Left lung (tissue), 14 donors: ENCODE measurements at regions of chr22 and their contacts with region 1.

Region 1: DNA sequence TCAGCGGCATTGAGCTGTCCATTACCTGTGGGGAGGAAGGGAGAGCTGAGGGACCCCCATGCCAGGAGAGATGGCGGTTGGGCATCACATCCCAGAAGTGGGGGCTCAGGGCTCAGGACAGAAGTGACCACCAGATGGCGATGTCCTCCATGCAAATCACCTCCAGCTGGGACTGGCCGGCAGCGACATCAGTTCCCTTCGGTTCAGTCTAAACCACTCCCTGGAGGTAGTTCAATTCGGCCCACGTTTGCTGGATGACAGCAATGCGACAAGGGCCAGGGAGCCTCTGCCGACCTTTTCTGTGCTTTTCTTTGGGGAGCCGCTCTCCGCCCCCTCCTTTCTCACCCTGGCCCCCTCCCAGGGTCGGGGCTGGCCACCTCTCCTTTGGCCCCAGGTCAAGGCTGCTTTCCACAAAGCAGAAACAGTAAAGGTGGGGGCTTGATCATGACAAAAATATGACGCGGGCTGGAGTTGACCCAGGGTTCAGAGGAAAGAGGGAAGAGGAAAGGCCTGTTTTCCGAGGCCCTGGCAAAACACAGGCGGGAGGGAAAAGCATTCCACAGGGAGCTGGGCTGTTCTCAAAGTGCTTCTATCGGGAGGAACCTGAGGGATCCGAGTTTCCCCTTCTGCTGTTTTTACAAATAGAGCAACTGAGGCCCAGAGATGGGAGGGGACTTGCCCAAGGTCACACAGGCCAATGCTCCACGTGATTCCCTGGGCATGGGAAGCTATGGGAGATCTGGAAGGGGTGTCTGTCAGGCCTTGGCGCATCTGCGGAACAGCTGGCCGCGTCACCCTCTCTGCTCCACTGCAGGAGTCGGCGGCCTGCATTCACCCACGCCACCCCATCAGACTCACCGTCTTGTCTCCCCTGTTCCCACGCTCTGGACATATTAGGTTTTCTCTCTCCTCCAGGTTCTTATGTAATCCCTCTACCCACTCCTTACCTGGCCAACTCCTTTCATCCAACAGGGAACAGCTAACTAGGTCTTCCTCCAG is 54.7 kb downstream of the FBXO7 start:
- DNase-seq: peak; percentile 80 to 92 (median 84)
- ATAC-seq: peak; percentile 87
- H3K4me3 ChIP-seq: no peak overlapping the region
- H3K27ac ChIP-seq: peak overlapping the region; percentile 17 to 34
- H3K4me1 ChIP-seq: peaks cover 16 to 35% of the 10 kb centered on the region in 2 donors
- H3K27me3 ChIP-seq: no peaks in the 10 kb centered on the region
- CTCF ChIP-seq: peak; percentile 82 to 88

Region 2: GRCh38 chr22:32396746-32397145 is 132.5 kb before region 1 on chr22:
- intact Hi-C with region 1: no loop called
- DNase-seq: peak in 1 of 4 donors; percentile 48
- ATAC-seq: peak; percentile 79
- H3K4me3 ChIP-seq: no peak overlapping the region
- H3K27ac ChIP-seq: no peak overlapping the region
- H3K4me1 ChIP-seq: no peaks in the 10 kb centered on the region
- H3K27me3 ChIP-seq: no peaks in the 10 kb centered on the region
- CTCF ChIP-seq: no peak

Region 3: DNA sequence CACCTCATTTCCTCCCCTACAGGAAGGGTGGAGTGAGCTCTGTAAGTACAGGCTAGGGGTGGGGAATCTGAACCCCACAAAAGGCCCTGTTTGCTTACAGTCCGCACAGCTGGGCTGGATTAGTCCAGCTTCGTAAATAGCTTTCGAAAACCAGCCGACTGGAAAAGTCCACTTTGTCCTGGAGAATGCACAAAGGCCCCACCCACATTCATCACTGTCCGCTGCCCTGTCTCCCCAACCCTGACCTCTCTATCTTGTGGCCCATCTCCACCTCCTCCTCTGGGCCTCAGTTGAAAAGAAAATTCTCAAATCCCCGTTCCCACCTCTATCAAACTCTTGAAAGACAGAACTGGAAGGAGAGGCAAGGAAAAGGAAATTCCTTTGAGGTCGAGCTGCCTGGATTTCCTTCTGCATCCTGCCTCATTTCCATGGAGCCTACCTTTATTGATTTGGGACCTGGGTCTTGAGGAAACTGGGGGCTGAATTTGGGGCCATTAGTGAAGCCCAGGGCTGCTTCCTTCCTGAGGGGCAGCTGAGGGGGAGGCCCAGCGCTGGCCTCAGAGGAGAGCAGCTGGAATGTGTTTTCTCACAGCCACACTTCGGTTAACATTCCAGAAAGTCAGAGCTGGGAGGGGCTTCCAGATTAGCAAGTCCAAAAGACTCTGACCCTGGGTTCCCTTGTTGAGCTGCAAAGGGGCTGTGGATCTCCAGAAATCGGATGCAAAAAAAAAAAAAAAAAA is 92.9 kb after region 1 on chr22:
- intact Hi-C with region 1: loop called in 1 of 2 experiments (anchors 10 kb)
- DNase-seq: peak in 2 of 4 donors; percentile 93 to 96
- ATAC-seq: peak; percentile 63
- H3K4me3 ChIP-seq: no peak overlapping the region
- H3K27ac ChIP-seq: peak overlapping the region; percentile 75 to 80
- H3K4me1 ChIP-seq: peaks cover 22 to 28% of the 10 kb centered on the region in 2 donors
- H3K27me3 ChIP-seq: peaks cover 0 to 5% of the 10 kb centered on the region in 2 donors
- CTCF ChIP-seq: no peak

Region 4: DNA sequence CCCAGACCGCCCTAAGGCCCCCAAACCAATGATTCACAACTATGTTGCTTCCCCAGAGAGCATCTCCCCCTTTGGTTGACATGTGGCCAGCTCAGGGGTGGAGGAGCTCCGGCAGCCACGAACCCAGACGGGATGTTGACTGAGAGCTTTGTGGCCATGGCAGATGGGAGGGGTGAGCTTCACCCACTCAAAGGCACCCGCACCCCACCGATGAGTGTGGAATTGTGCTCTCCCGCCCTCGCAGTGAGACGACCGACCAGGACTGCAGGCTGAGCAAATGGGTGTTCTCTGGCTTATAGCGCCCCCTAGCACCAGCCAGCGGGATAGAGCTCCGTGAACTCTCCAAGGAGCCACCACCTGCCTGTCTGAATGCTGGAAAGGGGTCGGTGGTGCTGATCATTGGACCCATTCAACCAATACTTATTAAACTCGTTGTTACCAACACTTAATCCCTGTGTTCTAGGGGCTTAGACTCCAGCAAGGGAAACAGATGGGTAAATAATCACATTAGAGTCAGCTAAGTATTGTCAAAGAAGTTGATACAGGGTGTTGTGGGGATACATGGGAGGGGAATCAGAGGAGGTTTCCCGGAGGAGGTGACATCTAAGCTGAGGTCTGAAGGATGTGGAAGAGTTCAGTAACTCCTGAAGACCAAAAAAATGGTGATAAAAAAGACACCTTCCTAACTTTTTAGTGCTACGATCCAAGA is 267.7 kb after region 1 on chr22:
- intact Hi-C with region 1: loop called in 1 of 2 experiments (anchors 10 kb)
- DNase-seq: peak; percentile 68 to 80 (median 73)
- ATAC-seq: peak; percentile 83
- H3K4me3 ChIP-seq: no peak overlapping the region
- H3K27ac ChIP-seq: no peak overlapping the region
- H3K4me1 ChIP-seq: peaks cover 0 to 14% of the 10 kb centered on the region in 2 donors
- H3K27me3 ChIP-seq: peaks cover 5 to 30% of the 10 kb centered on the region in 2 donors
- CTCF ChIP-seq: peak; percentile 85 to 91

Region 5: GRCh38 chr22:32820131-32821119 is 291.1 kb after region 1 on chr22:
- intact Hi-C with region 1: no loop called
- DNase-seq: no peak
- ATAC-seq: no peak
- H3K4me3 ChIP-seq: no peak overlapping the region
- H3K27ac ChIP-seq: no peak overlapping the region
- H3K4me1 ChIP-seq: peaks cover 4 to 30% of the 10 kb centered on the region in 2 donors
- H3K27me3 ChIP-seq: no peaks in the 10 kb centered on the region
- CTCF ChIP-seq: no peak

Region 6: DNA sequence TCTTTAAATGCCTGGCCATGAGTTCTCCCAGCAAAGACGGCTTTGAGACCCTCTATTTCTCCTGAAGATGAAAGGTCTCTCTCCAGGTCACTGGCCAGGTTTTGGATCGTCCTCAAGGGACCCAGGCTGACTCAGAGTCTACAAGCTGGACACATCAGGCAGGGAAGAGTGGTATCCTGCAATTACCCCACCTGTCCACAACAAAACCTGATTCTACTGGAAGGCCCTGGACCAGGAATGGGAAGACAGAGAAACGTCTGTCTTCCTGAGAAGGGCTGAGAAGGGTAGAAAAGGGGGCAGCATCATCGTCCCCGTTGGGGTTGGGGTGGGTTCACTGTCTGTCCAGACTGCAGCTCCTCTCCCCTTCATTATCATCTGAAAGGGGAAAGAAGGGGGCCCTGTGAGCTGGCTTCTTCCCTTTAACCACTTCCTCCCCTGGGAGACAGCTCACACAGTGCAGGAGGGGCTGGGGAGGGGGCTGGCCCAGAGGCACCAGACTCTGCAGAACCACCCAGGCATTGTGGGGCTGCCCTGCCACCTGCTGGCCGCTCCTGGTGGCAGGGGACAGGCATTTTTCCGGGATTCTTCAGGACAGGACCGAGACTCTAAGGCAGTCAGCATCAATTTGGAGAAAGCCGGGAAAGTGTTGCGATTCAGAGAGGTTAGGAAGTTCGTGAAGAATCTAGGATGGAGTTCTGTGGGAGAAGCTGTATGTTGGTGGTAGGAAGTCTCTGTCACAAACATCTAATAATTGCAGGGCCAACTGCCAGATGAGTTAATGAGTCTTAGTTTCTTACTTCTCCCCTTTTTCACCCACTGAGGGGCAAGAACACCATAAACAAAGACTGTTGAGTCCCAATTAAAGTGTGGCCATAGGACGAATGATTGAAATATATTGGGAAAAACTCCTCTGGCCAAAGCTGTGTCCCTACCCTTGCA is 471.3 kb after region 1 on chr22:
- intact Hi-C with region 1: loop called in 1 of 2 experiments (anchors 2 kb)
- DNase-seq: peak in 3 of 4 donors; percentile 53 to 79 (median 79)
- ATAC-seq: peak; percentile 73
- H3K4me3 ChIP-seq: no peak overlapping the region
- H3K27ac ChIP-seq: no peak overlapping the region
- H3K4me1 ChIP-seq: peaks cover 0 to 16% of the 10 kb centered on the region in 2 donors
- H3K27me3 ChIP-seq: no peaks in the 10 kb centered on the region
- CTCF ChIP-seq: peak; percentile 74 to 93